Thyroid gland (tissue), 4 donors: ENCODE measurements at regions of chrX and their contacts with region 1.

Region 1: DNA sequence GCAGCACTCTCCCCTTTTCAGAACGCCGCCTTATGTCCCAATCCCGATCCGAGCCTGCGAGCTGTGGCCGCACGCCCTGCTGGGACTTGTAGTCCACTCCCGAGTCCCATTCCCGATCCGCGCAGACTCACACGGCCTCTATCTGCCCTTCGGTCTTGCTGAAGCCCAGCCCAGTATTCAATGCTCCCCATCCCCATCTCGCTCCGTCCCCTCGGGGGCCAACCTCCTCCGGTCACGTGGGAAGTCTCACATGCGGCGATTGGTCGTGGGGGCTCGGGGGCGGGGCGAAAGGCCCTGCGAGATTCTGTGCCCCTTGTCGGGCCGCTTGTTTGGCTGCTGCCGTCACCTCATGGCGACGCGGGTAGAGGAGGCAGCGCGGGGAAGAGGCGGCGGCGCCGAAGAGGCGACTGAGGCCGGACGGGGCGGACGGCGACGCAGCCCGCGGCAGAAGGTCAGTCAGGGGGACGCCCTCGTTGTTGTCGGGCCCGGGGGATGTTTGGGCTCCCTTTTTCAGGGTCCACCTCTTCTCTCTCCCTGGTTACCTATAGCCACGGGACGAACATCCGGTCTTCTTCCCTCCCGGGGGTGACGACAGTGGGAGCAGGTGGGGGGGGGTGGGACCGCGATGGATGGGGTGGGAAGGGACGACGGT is at the start of gene TXLNG:
- DNase-seq: peak; percentile 97
- H3K4me3 ChIP-seq: peak within 1 kb of the TSS in 2 of 3 donors; percentile 53 to 73
- H3K27ac ChIP-seq: peak within 1 kb of the TSS; percentile 69 to 76 (median 75)
- H3K4me1 ChIP-seq: peaks cover 4 to 5% of the 10 kb centered on the region in 2 donors
- H3K27me3 ChIP-seq: no peaks in the 10 kb centered on the region
- CTCF ChIP-seq: no peak
- POLR2A ChIP-seq: peak; percentile 58 to 88
- total RNA-seq, gene TXLNG: 14.7 to 17.9 (median 16.3) TPM

Region 2: GRCh38 chrX:16719334-16720084 is 66.8 kb before region 1 on chrX and contains the start of gene SYAP1:
- intact Hi-C with region 1: loop called (anchors 10 kb)
- DNase-seq: peak; percentile 90 to 91
- H3K4me3 ChIP-seq: peak within 1 kb of the TSS; percentile 41 to 66 (median 53)
- H3K27ac ChIP-seq: peak within 1 kb of the TSS; percentile 78 to 93 (median 84)
- H3K4me1 ChIP-seq: peaks cover 9 to 12% of the 10 kb centered on the region in 2 donors
- H3K27me3 ChIP-seq: no peaks in the 10 kb centered on the region
- CTCF ChIP-seq: no peak
- POLR2A ChIP-seq: peak; percentile 7 to 97
- total RNA-seq, gene SYAP1: 24.7 to 34.2 (median 31.0) TPM